ENCODE measurements at regions of chr9 and their contacts with region 1.

Region 1: DNA sequence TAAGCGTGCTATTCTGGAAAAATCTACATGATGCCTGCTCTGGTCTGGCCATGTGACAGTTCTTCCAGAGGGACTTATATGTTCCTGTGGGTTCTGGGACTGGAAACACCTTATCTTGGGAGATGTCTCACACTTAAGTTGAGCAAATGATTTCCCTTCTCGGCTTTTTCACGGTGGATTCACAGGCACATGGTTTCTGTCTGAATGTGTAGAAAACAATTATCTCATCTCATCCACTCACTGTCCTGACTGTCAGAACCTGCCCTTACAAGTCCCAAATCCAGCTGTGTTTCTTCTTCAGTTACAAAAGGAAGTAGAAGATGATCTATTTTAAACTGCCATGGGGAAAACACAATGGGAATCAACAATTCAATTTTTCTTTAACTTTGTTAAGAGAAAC is 184.0 kb downstream of the SYK start:
- DNase-seq: no peak
- H3K4me3 Mint-ChIP-seq: no peak overlapping the region
- H3K27ac Mint-ChIP-seq: peak overlapping the region; percentile 89
- H3K4me1 Mint-ChIP-seq: peaks cover 38% of the 10 kb centered on the region
- H3K27me3 Mint-ChIP-seq: no peaks in the 10 kb centered on the region
- CTCF ChIP-seq: no peak

Region 2: DNA sequence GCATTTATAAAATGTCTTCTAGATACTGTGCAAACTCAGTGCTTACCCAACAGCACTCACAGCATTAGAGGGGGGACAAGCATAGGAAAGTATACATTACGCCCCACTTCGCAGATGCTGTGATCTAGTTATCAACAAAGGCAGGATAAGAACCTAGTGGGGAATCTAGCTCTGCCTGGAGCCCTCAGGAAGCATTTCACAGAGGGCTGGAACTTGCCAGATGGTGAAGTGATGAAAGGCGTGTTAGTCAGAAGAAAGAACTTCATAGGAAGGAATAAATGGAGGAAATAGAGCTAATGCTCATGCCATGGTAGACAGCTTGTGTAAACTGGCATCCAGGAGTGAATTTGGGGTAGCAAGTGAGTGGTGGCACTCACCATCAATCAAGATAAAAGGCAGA is 368.8 kb before region 1 on chr9:
- CTCF ChIA-PET with region 1: no interaction called
- POLR2A ChIA-PET with region 1: no interaction called
- intact Hi-C with region 1: no loop called
- DNase-seq: no peak
- H3K4me3 Mint-ChIP-seq: no peak overlapping the region
- H3K27ac Mint-ChIP-seq: no peak overlapping the region
- H3K4me1 Mint-ChIP-seq: no peaks in the 10 kb centered on the region
- H3K27me3 Mint-ChIP-seq: peaks cover 97% of the 10 kb centered on the region
- CTCF ChIP-seq: no peak

Region 3: DNA sequence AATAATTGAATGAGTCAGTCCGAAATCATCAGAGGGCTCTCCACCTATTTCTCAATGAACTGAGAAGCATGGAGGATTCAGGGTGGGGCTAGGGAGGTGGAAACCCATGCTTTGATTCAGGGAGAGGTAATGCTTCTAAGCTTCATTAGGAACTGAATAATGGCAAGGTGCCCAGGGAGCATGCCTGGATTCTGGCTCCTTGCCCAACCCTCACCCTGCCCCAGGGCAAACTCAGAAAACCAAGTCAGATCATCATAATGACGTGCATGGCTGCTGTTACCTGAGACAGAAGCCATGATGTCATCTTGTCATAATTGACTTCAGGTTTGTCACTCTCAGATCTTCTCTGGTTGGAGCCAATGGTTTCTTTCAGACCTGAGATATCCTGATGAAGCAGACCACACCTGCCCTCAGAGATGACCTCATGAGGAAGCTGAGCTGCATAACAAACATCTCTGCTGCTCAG is 15.5 kb after region 1 on chr9:
- CTCF ChIA-PET with region 1: interaction called, 4 read pairs
- POLR2A ChIA-PET with region 1: interaction called, 37 read pairs
- intact Hi-C with region 1: no loop called
- DNase-seq: peak; percentile 99
- H3K4me3 Mint-ChIP-seq: no peak overlapping the region
- H3K27ac Mint-ChIP-seq: peak overlapping the region; percentile 88
- H3K4me1 Mint-ChIP-seq: peaks cover 36% of the 10 kb centered on the region
- H3K27me3 Mint-ChIP-seq: no peaks in the 10 kb centered on the region
- CTCF ChIP-seq: no peak

Region 4: DNA sequence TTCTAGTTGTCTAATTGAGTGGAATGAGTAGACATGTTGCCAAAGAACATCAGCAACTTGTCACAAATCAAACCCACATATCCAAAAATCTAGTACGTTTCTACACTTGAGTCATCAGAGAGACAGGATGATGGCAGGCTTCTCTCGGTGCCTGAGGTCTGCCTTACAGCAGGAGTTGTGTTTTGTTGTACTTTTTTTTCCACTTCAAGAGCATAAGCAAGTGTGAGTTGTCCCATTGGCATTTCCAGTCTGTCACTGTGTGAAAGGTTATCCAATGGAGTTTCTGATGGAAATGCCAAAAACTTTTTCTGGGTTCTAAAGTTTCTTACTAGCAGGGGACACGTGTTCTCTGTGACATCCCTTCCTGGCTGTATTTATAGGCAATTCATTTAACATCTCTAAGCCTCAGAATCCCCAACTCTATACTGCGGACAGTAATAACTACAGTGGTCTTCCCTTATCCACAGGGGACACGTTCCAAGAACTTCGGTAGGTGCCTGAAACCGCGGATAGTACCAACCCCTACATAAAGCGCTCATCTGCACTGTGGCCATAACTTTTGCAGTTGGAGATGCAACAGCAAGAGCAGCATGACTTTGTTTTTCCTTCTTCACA is 62.5 kb after region 1 on chr9:
- CTCF ChIA-PET with region 1: no interaction called
- POLR2A ChIA-PET with region 1: no interaction called
- intact Hi-C with region 1: no loop called
- DNase-seq: peak; percentile 67
- H3K4me3 Mint-ChIP-seq: no peak overlapping the region
- H3K27ac Mint-ChIP-seq: peak overlapping the region; percentile 85
- H3K4me1 Mint-ChIP-seq: peaks cover 18% of the 10 kb centered on the region
- H3K27me3 Mint-ChIP-seq: no peaks in the 10 kb centered on the region
- CTCF ChIP-seq: no peak

Measured in MCF 10A (cell line).